ENCODE measurements at regions of chr20 and their contacts with region 1.

Region 1: GRCh38 chr20:59743767-59744485 is 139.6 kb downstream of the PHACTR3 start:
- DNase-seq: no peak
- H3K4me3 ChIP-seq: no peak overlapping the region
- H3K27ac ChIP-seq: no peak overlapping the region
- H3K4me1 ChIP-seq: peaks cover 3% of the 10 kb centered on the region
- H3K27me3 ChIP-seq: no peaks in the 10 kb centered on the region
- CTCF ChIP-seq: no peak
- POLR2A ChIP-seq: no peak

Region 2: DNA sequence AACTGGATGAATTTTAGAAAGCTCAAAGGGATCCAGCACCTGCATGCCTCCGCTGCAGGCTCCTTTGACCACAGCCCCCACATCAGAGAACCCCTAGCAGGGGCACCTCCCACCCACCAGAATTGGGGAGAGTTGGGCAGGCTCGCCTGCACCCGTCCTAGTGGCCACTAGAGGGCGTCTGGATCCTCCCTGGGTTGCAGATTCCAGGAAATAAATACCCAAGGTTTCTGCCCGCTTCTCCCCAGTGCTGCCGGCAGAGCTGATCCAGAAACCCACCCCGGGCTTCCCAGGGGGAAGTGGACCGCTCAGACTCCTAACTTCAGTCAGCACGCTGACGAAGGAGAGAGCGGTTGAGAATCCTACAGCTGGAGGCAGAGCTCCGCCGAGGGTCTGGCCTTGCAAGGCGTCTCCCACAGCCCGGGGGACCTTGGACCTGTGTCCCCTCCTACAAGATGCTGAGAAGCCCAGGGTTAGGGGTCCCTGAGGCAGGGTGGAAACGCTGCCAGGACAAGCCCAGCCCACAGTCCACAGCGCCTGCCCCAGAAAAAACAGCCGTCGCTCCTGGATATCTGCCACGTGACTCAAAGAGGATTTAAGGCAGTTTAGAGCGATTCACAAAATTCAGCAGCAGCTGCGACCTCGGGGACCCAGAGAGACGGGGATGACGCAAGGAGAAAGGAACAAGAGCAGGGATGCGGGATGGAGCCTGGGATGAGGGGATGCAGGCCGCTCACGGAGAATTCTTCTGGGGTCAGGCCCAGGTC is 172.2 kb before region 1 on chr20:
- intact Hi-C with region 1: loop called (anchors 10 kb)
- DNase-seq: no peak
- H3K4me3 ChIP-seq: peak overlapping the region; percentile 20 to 42
- H3K27ac ChIP-seq: no peak overlapping the region
- H3K4me1 ChIP-seq: peaks cover 6% of the 10 kb centered on the region
- H3K27me3 ChIP-seq: no peaks in the 10 kb centered on the region
- CTCF ChIP-seq: peak; percentile 86 to 93 (median 87)
- POLR2A ChIP-seq: no peak

Region 3: DNA sequence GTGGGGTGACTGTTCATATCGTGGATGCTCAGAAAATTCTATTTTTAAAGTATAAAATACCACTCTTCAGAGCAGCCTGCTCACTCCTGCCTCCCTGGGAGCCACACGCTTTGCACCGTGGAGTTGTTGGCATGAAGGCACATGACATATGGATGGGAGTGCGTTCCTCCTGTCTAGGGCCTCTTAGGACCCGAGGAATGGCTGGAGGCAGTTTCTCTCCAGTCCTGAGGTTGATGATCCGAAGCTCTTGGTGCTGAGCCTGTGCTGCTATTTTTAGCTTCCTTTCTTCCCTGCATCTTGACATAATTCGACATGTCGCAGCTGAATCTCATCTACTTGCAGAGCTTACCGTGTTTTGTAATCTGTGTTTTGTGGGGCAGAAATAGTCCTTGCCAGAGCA is 65.6 kb before region 1 on chr20:
- intact Hi-C with region 1: no loop called
- DNase-seq: no peak
- H3K4me3 ChIP-seq: no peak overlapping the region
- H3K27ac ChIP-seq: no peak overlapping the region
- H3K4me1 ChIP-seq: no peaks in the 10 kb centered on the region
- H3K27me3 ChIP-seq: no peaks in the 10 kb centered on the region
- CTCF ChIP-seq: no peak
- POLR2A ChIP-seq: no peak

Measured in vagina (tissue), 2 donors.